ENCODE measurements at regions of chr3 and their contacts with region 1.

Region 1: GRCh38 chr3:142963516-142964448 is at the start of gene PAQR9:
- DNase-seq: peak in 1 of 35 experiments; percentile 8
- ATAC-seq: peak in 3 of 4 experiments; percentile 23 to 53 (median 44)
- H3K4me3 ChIP-seq: peak within 1 kb of the TSS in 1 of 2 donors; percentile 58
- H3K4me3 Mint-ChIP-seq: peak within 1 kb of the TSS; percentile 72 to 81 (median 75)
- H3K27ac ChIP-seq: no peak within 1 kb of the TSS
- H3K27ac Mint-ChIP-seq: no peak within 1 kb of the TSS
- H3K4me1 ChIP-seq: peaks cover 0 to 8% of the 10 kb centered on the region in 2 experiments
- H3K4me1 Mint-ChIP-seq: peaks cover 11 to 16% (median 14%) of the 10 kb centered on the region in 3 donors
- H3K27me3 ChIP-seq: peaks cover 16 to 31% of the 10 kb centered on the region in 2 experiments
- H3K27me3 Mint-ChIP-seq: peaks cover 43 to 57% of the 10 kb centered on the region in 2 donors
- total RNA-seq, gene PAQR9: not detected

Region 2: GRCh38 chr3:142850386-142851023 is 113.3 kb before region 1 on chr3:
- CTCF ChIA-PET with region 1: no interaction called
- POLR2A ChIA-PET with region 1: no interaction called
- DNase-seq: no peak
- ATAC-seq: no peak
- H3K4me3 ChIP-seq: no peak overlapping the region
- H3K4me3 Mint-ChIP-seq: no peak overlapping the region
- H3K27ac ChIP-seq: no peak overlapping the region
- H3K27ac Mint-ChIP-seq: no peak overlapping the region
- H3K4me1 ChIP-seq: no peaks in the 10 kb centered on the region
- H3K4me1 Mint-ChIP-seq: no peaks in the 10 kb centered on the region
- H3K27me3 ChIP-seq: peaks cover 0 to 7% of the 10 kb centered on the region in 2 experiments
- H3K27me3 Mint-ChIP-seq: peaks cover 4 to 9% of the 10 kb centered on the region in 2 donors

Region 3: DNA sequence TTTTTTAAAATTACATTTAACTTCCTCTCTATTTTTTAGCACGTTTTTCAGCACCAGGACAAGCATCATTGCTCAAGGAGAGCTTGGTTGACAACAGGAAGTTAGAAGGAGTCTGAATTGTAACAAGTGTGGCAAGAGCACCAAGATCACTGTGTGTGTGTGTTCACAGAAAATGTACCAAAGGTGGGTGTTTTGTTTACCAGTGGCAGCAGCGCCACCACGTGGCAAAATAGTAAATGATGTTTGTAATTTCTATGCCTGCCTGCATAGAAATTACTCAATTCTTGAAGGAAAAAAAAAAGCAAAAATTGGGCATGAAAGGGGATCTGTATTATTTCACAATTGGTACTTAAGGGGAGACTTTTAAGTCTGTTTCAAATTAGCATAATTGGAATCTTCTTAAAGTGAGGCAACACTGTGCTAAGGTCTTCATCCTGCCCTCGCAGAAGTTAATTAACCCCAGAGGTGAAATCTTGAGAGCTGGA is 30.2 kb after region 1 on chr3:
- CTCF ChIA-PET with region 1: no interaction called
- POLR2A ChIA-PET with region 1: interaction called in 1 of 2 experiments, 10 read pairs
- DNase-seq: peak; percentile 7 to 79 (median 52)
- ATAC-seq: peak in 2 of 4 experiments; percentile 48 to 70
- H3K4me3 ChIP-seq: no peak overlapping the region
- H3K4me3 Mint-ChIP-seq: no peak overlapping the region
- H3K27ac ChIP-seq: no peak overlapping the region
- H3K27ac Mint-ChIP-seq: no peak overlapping the region
- H3K4me1 ChIP-seq: no peaks in the 10 kb centered on the region
- H3K4me1 Mint-ChIP-seq: peaks cover 6 to 9% (median 6%) of the 10 kb centered on the region in 3 donors
- H3K27me3 ChIP-seq: peaks cover 0 to 10% of the 10 kb centered on the region in 2 experiments
- H3K27me3 Mint-ChIP-seq: peaks cover 10 to 11% of the 10 kb centered on the region in 2 donors

Measured in T-cell (primary cell).